CD4-positive, alpha-beta T cell (primary cell): ENCODE measurements at regions of chr2 and their contacts with region 1.

Region 1: DNA sequence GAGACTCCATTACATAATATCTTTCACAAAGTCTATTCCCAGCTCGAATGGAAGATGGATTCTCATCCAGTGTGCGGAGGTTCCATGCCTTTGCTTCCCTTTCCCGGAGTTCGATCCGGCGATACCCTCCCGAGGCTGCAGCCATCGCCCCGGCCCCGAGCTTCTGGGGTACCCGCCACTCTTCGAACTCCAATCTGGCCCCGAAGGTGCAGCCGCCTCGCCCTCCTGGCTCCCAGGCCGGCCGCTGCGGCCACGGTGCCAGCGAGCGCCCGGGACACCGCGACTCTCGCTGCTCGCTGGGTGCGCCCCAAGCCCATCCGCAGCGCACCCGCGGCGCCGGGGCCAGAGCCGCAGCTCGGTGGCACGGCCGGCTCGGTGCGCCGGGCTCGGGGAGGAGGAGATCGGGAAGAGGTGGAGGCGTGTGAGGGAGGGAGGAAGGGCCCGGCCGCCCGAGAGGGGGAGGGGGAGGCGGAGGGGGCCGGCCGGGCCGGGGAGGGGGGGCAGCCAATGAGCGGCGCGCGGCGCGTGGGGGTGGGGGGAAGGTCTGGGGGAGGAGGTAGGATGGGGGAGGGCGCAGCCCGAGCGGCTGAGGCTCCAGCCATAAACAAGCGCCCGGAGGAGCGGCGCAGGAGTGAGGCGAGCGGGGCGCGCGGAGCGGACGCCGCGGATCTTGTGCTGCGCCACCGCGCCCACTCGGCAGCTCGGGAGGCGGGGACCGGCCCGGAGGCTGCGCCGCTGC is at the start of gene CRIM1:
- DNase-seq: peak in 12 of 14 experiments; percentile 2 to 73 (median 40)
- ATAC-seq: no peak
- H3K4me3 ChIP-seq: peak within 1 kb of the TSS; percentile 58
- H3K4me3 Mint-ChIP-seq: peak within 1 kb of the TSS; percentile 87
- H3K27ac ChIP-seq: no peak within 1 kb of the TSS
- H3K27ac Mint-ChIP-seq: no peak within 1 kb of the TSS
- H3K4me1 ChIP-seq: peaks cover 25% of the 10 kb centered on the region
- H3K4me1 Mint-ChIP-seq: peaks cover 31% of the 10 kb centered on the region
- H3K27me3 ChIP-seq: peaks cover 19 to 32% of the 10 kb centered on the region in 2 experiments
- H3K27me3 Mint-ChIP-seq: peaks cover 41% of the 10 kb centered on the region
- CTCF ChIP-seq: no peak
- total RNA-seq, gene CRIM1: 1.1 to 1.7 TPM

Region 2: DNA sequence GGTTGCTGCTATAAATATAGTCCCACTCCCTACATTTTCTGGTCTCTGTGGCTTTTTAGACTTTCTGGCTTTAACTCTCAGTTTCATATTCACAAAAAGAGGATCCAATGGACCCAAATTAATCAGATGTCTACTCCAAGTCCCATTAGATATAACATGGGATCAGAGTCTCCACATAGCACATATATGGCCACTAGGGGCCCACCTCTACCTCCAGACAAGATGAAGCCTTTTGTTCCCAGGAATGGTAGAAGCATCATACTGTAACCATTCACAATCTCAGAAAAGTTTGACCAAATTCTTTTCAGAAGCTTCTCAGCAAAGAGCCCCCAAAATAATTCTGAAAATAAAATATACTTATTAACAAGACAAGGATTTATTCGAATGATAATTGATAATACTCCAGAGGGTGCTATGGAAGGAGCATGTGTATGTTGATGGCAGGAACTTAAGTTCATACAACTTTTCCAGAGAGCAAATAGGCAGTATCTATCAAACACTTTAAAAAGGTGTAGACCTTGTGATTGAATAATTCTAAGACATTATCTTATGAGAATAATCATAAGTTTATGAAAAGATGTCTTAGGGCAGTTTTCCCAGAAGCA is 382.1 kb before region 1 on chr2:
- CTCF ChIA-PET with region 1: no interaction called
- POLR2A ChIA-PET with region 1: no interaction called
- intact Hi-C with region 1: loop called in 1 of 2 experiments (anchors 10 kb)
- DNase-seq: peak in 3 of 14 experiments; percentile 30 to 44 (median 33)
- ATAC-seq: no peak
- H3K4me3 ChIP-seq: no peak overlapping the region
- H3K4me3 Mint-ChIP-seq: no peak overlapping the region
- H3K27ac ChIP-seq: no peak overlapping the region
- H3K27ac Mint-ChIP-seq: no peak overlapping the region
- H3K4me1 ChIP-seq: no peaks in the 10 kb centered on the region
- H3K4me1 Mint-ChIP-seq: no peaks in the 10 kb centered on the region
- H3K27me3 ChIP-seq: peaks cover 0 to 6% of the 10 kb centered on the region in 2 experiments
- H3K27me3 Mint-ChIP-seq: no peaks in the 10 kb centered on the region
- CTCF ChIP-seq: peak; percentile 39

Region 3: GRCh38 chr2:36507408-36507812 is 152.1 kb after region 1 on chr2:
- CTCF ChIA-PET with region 1: no interaction called
- POLR2A ChIA-PET with region 1: no interaction called
- intact Hi-C with region 1: loop called in 1 of 2 experiments (anchors 10 kb)
- DNase-seq: peak in 5 of 14 experiments; percentile 19 to 42 (median 40)
- ATAC-seq: no peak
- H3K4me3 ChIP-seq: no peak overlapping the region
- H3K4me3 Mint-ChIP-seq: no peak overlapping the region
- H3K27ac ChIP-seq: no peak overlapping the region
- H3K27ac Mint-ChIP-seq: no peak overlapping the region
- H3K4me1 ChIP-seq: no peaks in the 10 kb centered on the region
- H3K4me1 Mint-ChIP-seq: no peaks in the 10 kb centered on the region
- H3K27me3 ChIP-seq: no peaks in the 10 kb centered on the region
- H3K27me3 Mint-ChIP-seq: no peaks in the 10 kb centered on the region
- CTCF ChIP-seq: peak; percentile 60

Region 4: DNA sequence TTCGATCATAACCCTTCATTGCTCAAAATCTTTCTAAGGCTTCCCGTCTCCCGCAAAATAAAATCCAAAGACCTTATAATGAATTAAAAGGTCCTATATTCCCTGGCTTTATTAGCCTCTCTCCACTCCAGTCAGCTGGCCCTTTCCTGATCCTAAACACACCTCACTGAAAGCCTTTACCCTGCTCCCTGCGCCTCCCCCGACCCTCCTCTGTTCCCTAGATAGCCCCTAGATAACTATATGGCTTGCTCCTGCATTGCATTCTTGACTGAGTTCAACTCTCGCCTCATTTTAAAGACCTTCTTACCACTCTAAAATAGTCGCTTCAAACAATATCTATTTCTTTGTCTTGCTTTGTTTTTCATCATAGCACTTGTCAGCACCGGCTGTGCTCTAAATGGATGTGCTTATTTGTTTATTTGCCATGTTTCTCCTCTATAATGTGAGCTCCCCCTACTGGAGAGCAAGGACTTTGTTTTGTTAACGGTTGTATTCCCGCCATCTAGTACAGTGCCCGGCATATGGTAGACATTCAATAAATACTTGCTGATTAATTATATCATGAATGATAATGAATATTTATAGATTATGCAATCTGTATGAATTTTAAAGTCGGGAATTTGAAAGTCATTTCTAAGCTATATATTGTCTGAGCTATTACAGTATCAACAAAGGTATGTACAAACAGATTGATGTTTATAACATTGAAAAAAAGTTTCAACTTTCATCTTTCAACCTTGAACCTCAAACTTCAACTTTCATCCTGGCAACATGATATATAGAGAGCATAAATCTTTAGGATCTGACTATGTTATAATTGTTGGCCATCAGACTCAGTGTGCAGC is 308.8 kb after region 1 on chr2:
- CTCF ChIA-PET with region 1: no interaction called
- POLR2A ChIA-PET with region 1: no interaction called
- intact Hi-C with region 1: loop called (anchors 2 to 10 kb)
- DNase-seq: peak in 4 of 14 experiments; percentile 14 to 59 (median 52)
- ATAC-seq: peak; percentile 56
- H3K4me3 ChIP-seq: no peak overlapping the region
- H3K4me3 Mint-ChIP-seq: no peak overlapping the region
- H3K27ac ChIP-seq: no peak overlapping the region
- H3K27ac Mint-ChIP-seq: no peak overlapping the region
- H3K4me1 ChIP-seq: no peaks in the 10 kb centered on the region
- H3K4me1 Mint-ChIP-seq: no peaks in the 10 kb centered on the region
- H3K27me3 ChIP-seq: peaks cover 0 to 6% of the 10 kb centered on the region in 2 experiments
- H3K27me3 Mint-ChIP-seq: peaks cover 11% of the 10 kb centered on the region
- CTCF ChIP-seq: peak; percentile 76